ENCODE measurements at regions of chr1 and their contacts with region 1.

Region 1: GRCh38 chr1:162502928-162503327 is 5.3 kb downstream of the UHMK1 start:
- DNase-seq: no peak
- H3K4me3 ChIP-seq: no peak overlapping the region
- H3K27ac ChIP-seq: peak overlapping the region; percentile 32
- H3K4me1 ChIP-seq: peaks cover 23% of the 10 kb centered on the region
- H3K27me3 ChIP-seq: no peaks in the 10 kb centered on the region
- CTCF ChIP-seq: no peak

Region 2: DNA sequence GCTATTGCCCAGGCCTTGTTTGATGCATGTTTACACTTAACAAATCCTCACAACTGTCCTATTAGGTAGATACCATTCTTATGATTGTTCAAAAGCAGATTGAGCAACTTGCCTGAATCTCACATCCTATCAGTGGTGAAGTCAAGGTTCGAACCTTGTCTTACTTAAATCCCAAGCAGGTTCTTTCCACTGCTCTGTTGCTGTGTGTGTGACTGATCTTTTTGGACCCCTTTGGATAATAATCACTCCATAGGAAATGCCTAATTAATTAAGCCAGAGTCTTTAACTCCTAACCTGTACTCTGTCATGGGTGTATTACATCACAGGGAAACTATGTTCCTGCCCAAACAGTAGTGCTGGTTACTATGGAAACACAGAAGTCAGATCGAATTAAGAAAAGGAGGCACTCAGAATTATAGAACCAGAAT is 210.5 kb before region 1 on chr1:
- CTCF ChIA-PET with region 1: no interaction called
- POLR2A ChIA-PET with region 1: no interaction called
- intact Hi-C with region 1: loop called (anchors 10 kb)
- DNase-seq: peak; percentile 59
- H3K4me3 ChIP-seq: no peak overlapping the region
- H3K27ac ChIP-seq: peak overlapping the region; percentile 16
- H3K4me1 ChIP-seq: peaks cover 83% of the 10 kb centered on the region
- H3K27me3 ChIP-seq: no peaks in the 10 kb centered on the region
- CTCF ChIP-seq: no peak

Region 3: GRCh38 chr1:162616848-162617247 is 113.9 kb after region 1 on chr1:
- CTCF ChIA-PET with region 1: no interaction called
- POLR2A ChIA-PET with region 1: no interaction called
- intact Hi-C with region 1: no loop called
- DNase-seq: no peak
- H3K4me3 ChIP-seq: no peak overlapping the region
- H3K27ac ChIP-seq: no peak overlapping the region
- H3K4me1 ChIP-seq: peaks cover 15% of the 10 kb centered on the region
- H3K27me3 ChIP-seq: no peaks in the 10 kb centered on the region
- CTCF ChIP-seq: no peak

Measured in A673 (cell line).